ENCODE measurements at regions of chr17 and their contacts with region 1.

Region 1: DNA sequence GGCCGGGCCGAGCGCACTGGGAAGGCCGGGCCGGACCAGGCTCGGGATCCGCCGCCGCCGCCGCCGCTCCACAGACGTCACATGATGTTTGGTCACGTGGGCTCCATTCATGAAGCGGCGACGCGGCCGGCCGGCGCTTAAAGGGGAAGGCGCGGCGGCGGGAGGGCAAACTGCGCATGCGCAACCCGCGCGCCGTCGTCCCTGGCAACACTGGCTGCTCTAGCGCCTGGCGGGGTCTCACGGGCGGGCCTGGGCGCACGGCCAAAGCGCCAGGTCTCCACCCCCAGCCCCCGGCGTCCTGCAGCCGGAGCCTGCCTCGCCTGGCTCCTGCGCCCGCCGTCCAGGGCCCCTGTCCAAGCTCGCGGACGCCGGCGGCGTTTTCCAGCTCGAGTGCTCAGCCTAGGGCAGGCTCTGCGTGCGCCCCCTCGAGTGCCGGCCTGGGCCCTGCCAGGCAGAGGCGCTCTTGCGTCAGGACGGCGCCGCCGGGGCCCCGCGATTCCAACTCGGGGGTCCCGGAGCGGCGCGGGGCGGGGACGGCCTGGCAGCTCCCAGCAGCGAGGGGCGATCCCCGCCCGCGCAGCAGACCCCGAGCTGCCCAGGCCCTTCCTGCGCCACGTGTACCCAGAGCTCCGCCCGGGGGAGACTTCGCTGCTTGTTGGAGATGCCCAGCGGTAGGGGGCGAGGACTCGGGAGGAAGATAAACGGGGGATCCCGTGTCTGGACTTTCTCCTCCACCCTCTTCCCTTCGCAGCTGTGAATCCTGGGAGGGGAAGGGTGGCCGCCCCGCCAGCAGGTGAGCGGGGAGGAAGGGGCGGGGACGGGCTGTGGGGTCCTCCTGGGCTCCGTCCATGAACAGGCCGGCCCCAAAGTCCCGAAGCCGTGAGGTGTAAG is at the start of gene MAFG:
- DNase-seq: peak; percentile 97
- H3K4me3 ChIP-seq: peak within 1 kb of the TSS; percentile 17 to 64 (median 49)
- H3K27ac ChIP-seq: peak within 1 kb of the TSS; percentile 77
- H3K4me1 ChIP-seq: peaks cover 17% of the 10 kb centered on the region
- H3K27me3 ChIP-seq: no peaks in the 10 kb centered on the region
- CTCF ChIP-seq: peak; percentile 29 to 47
- POLR2A ChIP-seq: peak; percentile 57
- total RNA-seq, gene MAFG: 30.5 and 35.0 TPM in 2 replicates

Region 2: GRCh38 chr17:81860756-81861518 is 67.0 kb before region 1 on chr17:
- CTCF ChIA-PET with region 1: no interaction called
- POLR2A ChIA-PET with region 1: no interaction called
- dilution Hi-C with region 1: no loop called
- intact Hi-C with region 1: loop called (anchors 2 kb)
- DNase-seq: peak; percentile 100
- H3K4me3 ChIP-seq: peak overlapping the region in 2 of 3 experiments; percentile 39 to 61
- H3K27ac ChIP-seq: peak overlapping the region; percentile 80
- H3K4me1 ChIP-seq: peaks cover 20% of the 10 kb centered on the region
- H3K27me3 ChIP-seq: no peaks in the 10 kb centered on the region
- CTCF ChIP-seq: no peak
- POLR2A ChIP-seq: peak; percentile 95

Region 3: DNA sequence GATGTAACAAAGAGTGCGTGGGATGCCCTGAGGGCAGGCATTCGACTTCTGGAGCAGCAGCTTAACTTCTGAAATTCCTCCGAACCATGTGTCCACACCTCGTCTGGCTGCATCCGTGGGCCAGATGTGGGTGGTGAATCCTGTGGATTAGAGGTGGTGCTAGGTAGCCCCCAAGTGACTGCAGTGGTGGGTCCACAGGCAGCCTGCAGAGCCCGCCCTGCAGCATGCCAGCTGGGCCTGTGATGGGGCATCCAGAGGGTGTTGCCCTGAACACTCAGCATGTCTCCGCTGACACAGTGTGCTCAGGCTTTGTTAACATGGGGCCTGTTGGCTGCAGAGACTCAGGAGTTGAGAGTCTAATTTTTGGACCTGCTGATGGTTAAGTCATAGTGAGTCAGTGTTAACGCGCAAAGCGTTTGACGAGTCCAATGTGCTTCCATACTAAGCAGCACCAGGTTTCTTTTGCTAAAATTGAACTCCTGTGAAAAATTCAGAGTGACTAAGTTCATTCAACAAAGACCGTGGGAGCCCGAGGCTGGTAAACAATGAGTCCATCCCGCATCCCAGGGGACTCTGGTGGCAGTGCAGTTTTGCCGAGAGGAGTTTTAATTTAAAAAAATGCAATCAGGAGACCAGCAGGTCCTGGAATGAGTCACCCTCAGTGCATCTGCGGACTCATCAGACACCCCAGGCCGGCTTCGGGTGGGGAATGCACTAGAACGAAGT is 29.6 kb before region 1 on chr17:
- CTCF ChIA-PET with region 1: no interaction called
- POLR2A ChIA-PET with region 1: interaction called, 10 read pairs
- dilution Hi-C with region 1: no loop called
- intact Hi-C with region 1: no loop called
- DNase-seq: no peak
- H3K4me3 ChIP-seq: no peak overlapping the region
- H3K27ac ChIP-seq: no peak overlapping the region
- H3K4me1 ChIP-seq: peaks cover 3% of the 10 kb centered on the region
- H3K27me3 ChIP-seq: no peaks in the 10 kb centered on the region
- CTCF ChIP-seq: no peak
- POLR2A ChIP-seq: no peak

Region 4: DNA sequence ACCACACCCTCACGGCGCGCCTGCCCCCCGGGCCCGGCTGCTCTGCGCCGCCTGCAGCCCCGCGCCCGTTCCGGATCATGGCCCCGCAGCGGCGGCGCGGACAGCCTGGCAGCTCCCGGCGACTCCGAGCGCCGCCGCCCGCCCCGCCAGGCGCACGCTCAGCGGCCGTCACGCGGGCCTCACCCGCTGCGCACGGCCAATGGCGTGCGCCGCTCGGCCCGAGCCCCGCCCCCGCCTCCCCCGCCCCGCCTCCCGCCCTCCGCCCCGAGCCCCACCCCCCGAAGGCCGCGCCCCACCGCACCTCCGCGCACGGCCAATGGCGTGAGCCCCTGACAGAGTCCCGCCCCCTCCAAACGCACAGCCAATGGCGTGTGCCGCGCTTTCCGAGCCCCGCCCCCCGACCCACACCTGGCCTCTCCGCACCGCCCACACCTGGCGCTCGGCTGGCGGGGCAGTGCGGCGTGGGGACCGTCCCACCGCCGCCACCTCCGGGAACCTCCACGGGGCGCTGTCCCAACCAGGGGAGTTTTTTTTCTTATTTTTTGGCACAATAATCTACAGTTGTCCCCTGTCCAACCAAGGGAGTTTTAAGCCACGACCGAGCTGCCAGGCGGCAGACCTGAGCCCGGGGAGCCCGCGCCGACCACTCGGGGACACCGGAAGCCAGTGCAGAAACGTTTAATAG is 16.5 kb before region 1 on chr17 and contains the start of gene PCYT2:
- CTCF ChIA-PET with region 1: interaction called, 6 read pairs
- POLR2A ChIA-PET with region 1: no interaction called
- dilution Hi-C with region 1: no loop called
- intact Hi-C with region 1: loop called (anchors 1 kb)
- DNase-seq: peak; percentile 71
- H3K4me3 ChIP-seq: peak within 1 kb of the TSS; percentile 56 to 72 (median 67)
- H3K27ac ChIP-seq: no peak within 1 kb of the TSS
- H3K4me1 ChIP-seq: peaks cover 6% of the 10 kb centered on the region
- H3K27me3 ChIP-seq: no peaks in the 10 kb centered on the region
- CTCF ChIP-seq: no peak
- POLR2A ChIP-seq: peak; percentile 37
- total RNA-seq, gene PCYT2: 52.3 and 57.1 TPM in 2 replicates

Region 5: GRCh38 chr17:81941790-81942553 is 14.1 kb after region 1 on chr17:
- CTCF ChIA-PET with region 1: interaction called, 10 read pairs
- POLR2A ChIA-PET with region 1: no interaction called
- dilution Hi-C with region 1: no loop called
- intact Hi-C with region 1: loop called (anchors 1 kb)
- DNase-seq: no peak
- H3K4me3 ChIP-seq: no peak overlapping the region
- H3K27ac ChIP-seq: no peak overlapping the region
- H3K4me1 ChIP-seq: no peaks in the 10 kb centered on the region
- H3K27me3 ChIP-seq: peaks cover 0 to 7% of the 10 kb centered on the region in 2 experiments
- CTCF ChIP-seq: no peak
- POLR2A ChIP-seq: no peak

Region 6: GRCh38 chr17:82003411-82004381 is 75.8 kb after region 1 on chr17:
- CTCF ChIA-PET with region 1: no interaction called
- POLR2A ChIA-PET with region 1: no interaction called
- dilution Hi-C with region 1: no loop called
- intact Hi-C with region 1: loop called (anchors 5 kb)
- DNase-seq: peak; percentile 93
- H3K4me3 ChIP-seq: no peak overlapping the region
- H3K27ac ChIP-seq: peak overlapping the region; percentile 54
- H3K4me1 ChIP-seq: peaks cover 13% of the 10 kb centered on the region
- H3K27me3 ChIP-seq: no peaks in the 10 kb centered on the region
- CTCF ChIP-seq: no peak
- POLR2A ChIP-seq: no peak

Region 7: GRCh38 chr17:82153745-82154375 is 226.0 kb after region 1 on chr17:
- CTCF ChIA-PET with region 1: no interaction called
- POLR2A ChIA-PET with region 1: no interaction called
- dilution Hi-C with region 1: no loop called
- intact Hi-C with region 1: loop called (anchors 1 kb)
- DNase-seq: peak; percentile 56
- H3K4me3 ChIP-seq: no peak overlapping the region
- H3K27ac ChIP-seq: no peak overlapping the region
- H3K4me1 ChIP-seq: no peaks in the 10 kb centered on the region
- H3K27me3 ChIP-seq: no peaks in the 10 kb centered on the region
- CTCF ChIP-seq: peak; percentile 72 to 92
- POLR2A ChIP-seq: no peak

Measured in endothelial cell of umbilical vein (primary cell).